ENCODE measurements at regions of chr3 and their contacts with region 1.

Region 1: GRCh38 chr3:192444096-192444790 is 283.1 kb downstream of the FGF12 start:
- DNase-seq: peak; percentile 76
- ATAC-seq: peak; percentile 68
- H3K4me3 Mint-ChIP-seq: no peak overlapping the region
- H3K27ac Mint-ChIP-seq: no peak overlapping the region
- H3K4me1 Mint-ChIP-seq: no peaks in the 10 kb centered on the region
- H3K27me3 Mint-ChIP-seq: peaks cover 26% of the 10 kb centered on the region

Region 2: GRCh38 chr3:191244242-191244867 is 1199.9 kb before region 1 on chr3:
- CTCF ChIA-PET with region 1: interaction called, 3 read pairs
- POLR2A ChIA-PET with region 1: no interaction called
- intact Hi-C with region 1: loop called in 1 of 2 experiments (anchors 10 kb)
- DNase-seq: no peak
- ATAC-seq: no peak
- H3K4me3 Mint-ChIP-seq: no peak overlapping the region
- H3K27ac Mint-ChIP-seq: no peak overlapping the region
- H3K4me1 Mint-ChIP-seq: peaks cover 13% of the 10 kb centered on the region
- H3K27me3 Mint-ChIP-seq: peaks cover 1% of the 10 kb centered on the region

Region 3: GRCh38 chr3:192130534-192131132 is 313.6 kb before region 1 on chr3:
- CTCF ChIA-PET with region 1: interaction called, 4 read pairs
- POLR2A ChIA-PET with region 1: no interaction called
- intact Hi-C with region 1: loop called in 1 of 2 experiments (anchors 1 kb)
- DNase-seq: peak; percentile 35
- ATAC-seq: peak; percentile 53
- H3K4me3 Mint-ChIP-seq: no peak overlapping the region
- H3K27ac Mint-ChIP-seq: no peak overlapping the region
- H3K4me1 Mint-ChIP-seq: no peaks in the 10 kb centered on the region
- H3K27me3 Mint-ChIP-seq: no peaks in the 10 kb centered on the region

Region 4: DNA sequence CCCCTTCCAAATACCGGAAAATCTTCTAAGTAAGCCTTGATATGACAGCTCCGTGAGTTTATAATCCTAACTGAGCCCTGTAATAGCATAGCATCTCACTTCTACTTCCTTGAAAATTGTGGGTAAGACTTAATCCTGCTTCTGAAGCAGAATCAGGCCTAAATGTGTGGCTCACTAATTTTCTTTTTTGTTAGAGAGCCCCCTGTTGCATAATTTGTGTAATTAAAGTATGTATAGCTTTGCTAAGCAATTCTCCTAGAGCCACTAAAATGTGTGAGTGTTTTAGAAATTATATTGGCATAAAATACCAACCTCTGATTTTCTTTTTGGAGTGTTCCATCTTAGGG is 21.3 kb before region 1 on chr3:
- CTCF ChIA-PET with region 1: interaction called, 14 read pairs
- POLR2A ChIA-PET with region 1: no interaction called
- intact Hi-C with region 1: no loop called
- DNase-seq: no peak
- ATAC-seq: no peak
- H3K4me3 Mint-ChIP-seq: no peak overlapping the region
- H3K27ac Mint-ChIP-seq: no peak overlapping the region
- H3K4me1 Mint-ChIP-seq: no peaks in the 10 kb centered on the region
- H3K27me3 Mint-ChIP-seq: peaks cover 5% of the 10 kb centered on the region